ENCODE measurements at regions of chr6 and their contacts with region 1.

Region 1: GRCh38 chr6:3388786-3389185 is 68.1 kb downstream of the SLC22A23 start:
- DNase-seq: peak; percentile 78
- ATAC-seq: peak; percentile 89
- H3K4me3 ChIP-seq: no peak overlapping the region
- H3K4me3 Mint-ChIP-seq: peak overlapping the region; percentile 1
- H3K27ac ChIP-seq: peak overlapping the region in 1 of 2 donors; percentile 35
- H3K27ac Mint-ChIP-seq: peak overlapping the region; percentile 59
- H3K4me1 ChIP-seq: peaks cover 22 to 27% of the 10 kb centered on the region in 2 donors
- H3K4me1 Mint-ChIP-seq: peaks cover 32% of the 10 kb centered on the region
- H3K27me3 ChIP-seq: no peaks in the 10 kb centered on the region
- H3K27me3 Mint-ChIP-seq: peaks cover 6% of the 10 kb centered on the region
- CTCF ChIP-seq: no peak

Region 2: GRCh38 chr6:3372007-3372846 is 16.6 kb before region 1 on chr6:
- CTCF ChIA-PET with region 1: no interaction called
- POLR2A ChIA-PET with region 1: interaction called, 12 read pairs
- intact Hi-C with region 1: no loop called
- DNase-seq: no peak
- ATAC-seq: no peak
- H3K4me3 ChIP-seq: no peak overlapping the region
- H3K4me3 Mint-ChIP-seq: no peak overlapping the region
- H3K27ac ChIP-seq: no peak overlapping the region
- H3K27ac Mint-ChIP-seq: no peak overlapping the region
- H3K4me1 ChIP-seq: peaks cover 0 to 1% of the 10 kb centered on the region in 2 donors
- H3K4me1 Mint-ChIP-seq: peaks cover 6% of the 10 kb centered on the region
- H3K27me3 ChIP-seq: peaks cover 0 to 6% (median 2%) of the 10 kb centered on the region in 4 experiments
- H3K27me3 Mint-ChIP-seq: peaks cover 6% of the 10 kb centered on the region
- CTCF ChIP-seq: no peak

Region 3: GRCh38 chr6:3442431-3443220 is 53.8 kb after region 1 on chr6:
- CTCF ChIA-PET with region 1: no interaction called
- POLR2A ChIA-PET with region 1: no interaction called
- intact Hi-C with region 1: no loop called
- DNase-seq: no peak
- ATAC-seq: no peak
- H3K4me3 ChIP-seq: no peak overlapping the region
- H3K4me3 Mint-ChIP-seq: no peak overlapping the region
- H3K27ac ChIP-seq: no peak overlapping the region
- H3K27ac Mint-ChIP-seq: no peak overlapping the region
- H3K4me1 ChIP-seq: no peaks in the 10 kb centered on the region
- H3K4me1 Mint-ChIP-seq: no peaks in the 10 kb centered on the region
- H3K27me3 ChIP-seq: peaks cover 0 to 13% (median 0%) of the 10 kb centered on the region in 4 experiments
- H3K27me3 Mint-ChIP-seq: peaks cover 40% of the 10 kb centered on the region
- CTCF ChIP-seq: no peak

Measured in B cell (primary cell).